ENCODE measurements at regions of chrX and their contacts with region 1.

Region 1: GRCh38 chrX:155767051-155767875 is 113.9 kb upstream of the VAMP7 start:
- DNase-seq: peak; percentile 61
- H3K4me3 Mint-ChIP-seq: peak overlapping the region; percentile 77
- H3K27ac Mint-ChIP-seq: no peak overlapping the region
- H3K4me1 Mint-ChIP-seq: peaks cover 2% of the 10 kb centered on the region
- H3K27me3 Mint-ChIP-seq: no peaks in the 10 kb centered on the region

Region 2: DNA sequence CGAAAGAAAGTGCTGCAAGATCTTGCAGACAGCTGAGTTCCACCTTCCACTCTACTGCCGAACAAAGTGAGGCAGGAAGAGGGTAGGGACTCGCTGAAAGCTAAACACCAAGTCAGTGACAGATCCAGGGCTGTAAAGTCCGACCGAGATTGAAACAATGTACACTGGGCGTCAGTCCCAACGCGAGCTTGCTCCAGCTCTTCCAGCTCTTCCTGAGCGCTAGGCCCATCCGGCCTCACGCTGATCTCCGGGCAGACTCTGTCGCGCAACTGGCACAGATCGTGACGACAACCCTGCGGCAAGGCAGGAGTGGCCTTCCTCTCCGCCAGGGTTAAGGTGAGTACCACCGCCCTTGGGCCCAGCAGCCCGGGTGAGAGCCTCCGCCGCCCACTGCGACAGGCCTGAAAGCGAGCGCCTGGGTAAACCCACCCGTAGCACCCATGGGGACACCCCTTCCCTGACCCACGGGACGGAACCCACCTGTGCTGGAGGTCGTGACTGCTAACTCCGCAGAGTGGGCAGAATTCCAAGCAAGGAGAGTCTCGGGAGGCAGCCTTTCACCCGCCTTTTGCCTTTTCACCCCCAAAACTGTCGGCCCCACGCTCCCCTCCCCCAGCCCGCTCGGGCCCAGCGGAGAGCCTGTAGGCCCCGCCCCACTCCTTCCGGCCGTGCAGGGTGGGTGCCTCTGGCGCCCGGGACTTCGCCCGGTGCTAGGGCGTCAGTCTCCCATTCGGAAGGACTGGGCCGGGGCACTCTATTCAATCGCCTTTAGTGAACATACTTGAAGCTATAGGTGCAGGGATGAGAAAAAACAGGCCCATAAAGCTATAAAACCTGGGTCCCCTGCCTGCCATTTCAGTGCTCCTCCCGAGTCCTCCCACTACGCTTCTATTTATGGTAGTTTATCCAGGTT is 154.7 kb before region 1 on chrX and contains the start of gene TMLHE:
- CTCF ChIA-PET with region 1: no interaction called
- intact Hi-C with region 1: loop called (anchors 5 kb)
- DNase-seq: peak; percentile 71
- H3K4me3 Mint-ChIP-seq: peak within 1 kb of the TSS; percentile 83
- H3K27ac Mint-ChIP-seq: peak within 1 kb of the TSS; percentile 92
- H3K4me1 Mint-ChIP-seq: peaks cover 22% of the 10 kb centered on the region
- H3K27me3 Mint-ChIP-seq: no peaks in the 10 kb centered on the region
- total RNA-seq, gene TMLHE: 13.2 to 14.7 TPM

Region 3: DNA sequence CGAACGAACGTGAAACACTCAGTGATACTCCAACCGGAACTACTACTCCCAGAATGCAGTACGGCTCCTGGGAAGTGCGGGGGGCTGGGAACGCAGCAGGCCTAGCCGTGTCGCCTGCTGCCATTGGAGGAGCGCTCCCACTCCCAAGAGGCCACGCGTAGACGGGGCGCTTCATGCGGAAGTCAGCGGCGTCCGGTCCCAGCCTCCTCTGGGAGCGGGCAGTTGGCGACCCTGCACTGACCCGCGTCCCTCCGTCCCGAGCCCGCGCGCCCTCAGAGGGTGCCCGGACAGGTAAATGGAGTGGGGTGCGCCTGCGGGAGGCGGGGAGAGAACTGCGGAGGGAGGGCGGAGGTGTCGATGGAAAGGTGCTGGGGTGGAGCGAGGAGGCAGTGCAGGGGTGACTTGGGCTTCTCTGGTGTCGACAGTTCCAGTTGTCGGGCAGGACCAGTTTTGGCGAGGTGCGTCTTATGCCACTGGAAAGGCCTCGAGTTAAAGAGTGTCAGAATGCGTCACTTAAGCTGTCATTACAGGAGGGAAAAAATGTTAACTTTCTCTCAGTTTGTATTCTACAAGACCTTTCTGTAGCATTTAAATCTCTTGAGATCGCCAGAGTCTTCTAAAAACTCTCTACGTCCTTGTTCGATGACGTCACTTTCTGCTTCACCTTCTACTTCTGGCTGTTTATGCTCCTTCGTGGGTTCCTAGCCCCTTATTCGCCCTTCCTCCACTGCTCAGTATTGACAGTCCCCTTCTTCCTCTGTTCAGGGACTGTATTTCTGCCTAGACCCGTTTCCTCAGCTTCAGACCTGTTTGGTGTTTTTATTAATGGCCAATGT is 114.1 kb after region 1 on chrX and contains the start of gene VAMP7:
- CTCF ChIA-PET with region 1: no interaction called
- intact Hi-C with region 1: loop called (anchors 1 kb)
- DNase-seq: peak; percentile 88
- H3K4me3 Mint-ChIP-seq: peak within 1 kb of the TSS; percentile 89
- H3K27ac Mint-ChIP-seq: peak within 1 kb of the TSS; percentile 86
- H3K4me1 Mint-ChIP-seq: peaks cover 20% of the 10 kb centered on the region
- H3K27me3 Mint-ChIP-seq: no peaks in the 10 kb centered on the region
- total RNA-seq, gene VAMP7: 33.5 to 34.4 TPM

Measured in activated naive CD4-positive, alpha-beta T cell treated with anti-CD3 and anti-CD28 coated beads for 36 hours (primary cell).